ENCODE measurements at regions of chr1 and their contacts with region 1.

Region 1: DNA sequence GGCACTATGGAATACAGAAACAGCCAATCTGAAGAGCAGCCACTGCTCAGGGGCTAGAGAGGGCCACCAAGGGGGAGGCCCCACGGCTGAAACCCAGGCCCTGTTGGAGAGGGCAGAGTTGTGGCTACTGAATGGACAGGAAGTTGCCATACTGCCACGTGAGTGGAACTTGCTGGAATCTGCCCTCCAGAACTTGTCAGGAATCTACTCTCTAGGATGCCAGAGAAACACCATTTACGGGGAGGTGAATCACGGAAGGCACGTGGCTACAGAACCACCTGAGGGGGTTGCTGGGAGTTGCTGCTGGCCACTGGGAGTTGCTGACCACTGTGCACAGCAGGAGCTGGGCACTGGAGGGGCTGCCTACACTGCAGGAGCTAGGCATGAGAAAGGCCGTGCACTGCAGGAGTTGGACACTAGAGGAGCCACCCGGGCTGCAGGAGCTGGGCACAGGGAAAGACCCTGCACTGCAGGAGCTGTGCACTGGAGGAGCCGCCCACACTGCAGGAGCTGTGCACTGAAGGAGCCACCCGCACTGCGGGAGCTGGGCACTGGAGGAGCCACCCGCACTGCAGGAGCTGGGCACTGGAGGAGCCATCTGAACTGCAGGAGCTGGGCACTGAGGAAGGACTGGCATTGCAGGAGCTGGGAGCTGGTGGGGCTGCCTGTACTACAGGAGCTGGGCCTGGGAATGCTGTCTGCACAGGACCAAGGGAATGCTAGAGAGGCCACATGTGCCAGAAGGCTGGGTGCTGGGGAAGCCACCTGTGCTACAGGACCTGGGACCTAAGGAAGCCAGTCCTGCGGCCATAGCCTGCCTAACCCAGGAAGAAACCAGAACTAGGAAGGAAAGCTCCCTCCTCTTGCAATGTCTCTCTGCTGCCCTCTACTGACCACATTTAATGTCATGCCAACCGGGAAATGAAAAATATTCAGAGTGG is 343.4 kb downstream of the MATN1 start:
- DNase-seq: peak; percentile 26 to 72
- H3K4me3 ChIP-seq: no peak overlapping the region
- H3K4me1 ChIP-seq: no peaks in the 10 kb centered on the region
- H3K27me3 ChIP-seq: peaks cover 9% of the 10 kb centered on the region; the same call in 1 of the 2 replicates

Region 2: GRCh38 chr1:29230553-29231378 is 1149.2 kb before region 1 on chr1 and contains the start of gene MECR:
- in situ Hi-C with region 1: loop called (anchors 10 kb)
- DNase-seq: peak; percentile 83 to 96
- H3K4me3 ChIP-seq: peak within 1 kb of the TSS; percentile 89
- H3K4me1 ChIP-seq: peaks cover 5% of the 10 kb centered on the region
- H3K27me3 ChIP-seq: no peaks in the 10 kb centered on the region

Region 3: GRCh38 chr1:30550365-30551220 is 170.6 kb after region 1 on chr1:
- in situ Hi-C with region 1: no loop called
- DNase-seq: no peak
- H3K4me3 ChIP-seq: no peak overlapping the region
- H3K4me1 ChIP-seq: no peaks in the 10 kb centered on the region
- H3K27me3 ChIP-seq: no peaks in the 10 kb centered on the region